ENCODE measurements at regions of chr1 and their contacts with region 1.

Region 1: DNA sequence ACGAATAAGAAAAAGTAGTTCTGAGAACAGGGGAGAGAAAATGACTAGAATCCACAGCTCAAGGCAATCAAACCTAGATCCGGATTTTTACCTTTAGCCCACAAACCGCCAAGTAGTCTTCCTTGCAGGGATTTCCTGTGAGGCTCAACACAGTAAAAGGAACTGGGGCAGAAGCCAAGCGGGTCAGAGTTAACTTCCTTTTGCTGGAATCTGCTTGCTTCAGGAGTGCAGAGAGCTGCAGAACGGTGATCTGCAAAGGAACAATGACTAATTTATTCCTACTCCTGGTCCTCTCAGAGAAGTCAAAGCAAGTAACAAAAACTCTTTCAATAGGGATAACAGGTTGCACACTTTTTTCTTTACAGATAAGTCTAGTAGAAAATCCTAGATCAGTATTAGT is 53.4 kb downstream of the UBR4 start:
- DNase-seq: no peak
- ATAC-seq: no peak
- H3K4me3 ChIP-seq: no peak overlapping the region
- H3K4me3 Mint-ChIP-seq: no peak overlapping the region
- H3K27ac ChIP-seq: no peak overlapping the region
- H3K27ac Mint-ChIP-seq: no peak overlapping the region
- H3K4me1 ChIP-seq: no peaks in the 10 kb centered on the region
- H3K4me1 Mint-ChIP-seq: no peaks in the 10 kb centered on the region
- H3K27me3 ChIP-seq: no peaks in the 10 kb centered on the region
- H3K27me3 Mint-ChIP-seq: no peaks in the 10 kb centered on the region
- CTCF ChIP-seq: no peak

Region 2: GRCh38 chr1:19203440-19203839 is 46.8 kb after region 1 on chr1:
- CTCF ChIA-PET with region 1: no interaction called
- POLR2A ChIA-PET with region 1: no interaction called
- intact Hi-C with region 1: loop called in 1 of 2 experiments (anchors 5 kb)
- DNase-seq: no peak
- ATAC-seq: no peak
- H3K4me3 ChIP-seq: no peak overlapping the region
- H3K4me3 Mint-ChIP-seq: no peak overlapping the region
- H3K27ac ChIP-seq: no peak overlapping the region
- H3K27ac Mint-ChIP-seq: no peak overlapping the region
- H3K4me1 ChIP-seq: peaks cover 29% of the 10 kb centered on the region
- H3K4me1 Mint-ChIP-seq: peaks cover 59% of the 10 kb centered on the region
- H3K27me3 ChIP-seq: no peaks in the 10 kb centered on the region
- H3K27me3 Mint-ChIP-seq: no peaks in the 10 kb centered on the region
- CTCF ChIP-seq: no peak

Region 3: DNA sequence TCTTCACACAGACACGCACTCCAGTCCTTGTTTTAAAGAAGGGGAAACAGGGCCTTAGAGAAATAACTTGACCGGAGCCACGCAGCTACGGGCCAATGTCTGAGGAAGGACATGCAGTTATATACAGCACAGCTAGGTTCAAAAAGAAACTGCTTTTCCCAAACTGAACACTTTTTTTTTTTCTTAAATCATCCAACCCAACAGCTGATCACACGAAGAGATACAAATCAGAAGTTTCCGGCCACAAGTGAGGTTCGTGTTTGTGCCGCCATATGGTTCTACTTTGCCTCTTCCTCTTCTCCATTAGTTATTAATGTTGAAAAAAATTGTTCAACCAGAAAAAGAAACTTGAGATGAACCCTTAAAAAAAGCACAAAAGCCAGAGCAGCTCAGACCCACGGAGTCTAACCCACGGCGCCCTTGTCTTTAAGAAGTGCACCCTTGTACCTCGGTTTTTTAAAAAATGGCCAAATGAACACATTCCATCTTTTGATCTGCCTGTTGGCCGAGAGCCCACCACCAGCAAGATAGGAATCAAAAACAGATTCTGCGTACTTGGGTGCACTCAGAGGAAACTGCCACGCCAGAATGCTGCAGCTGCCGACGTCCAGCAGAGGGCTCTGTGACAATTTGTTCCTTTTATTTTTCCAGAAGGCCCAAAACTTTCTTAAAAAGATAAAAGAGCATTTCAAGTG is 234.4 kb after region 1 on chr1:
- CTCF ChIA-PET with region 1: no interaction called
- POLR2A ChIA-PET with region 1: no interaction called
- intact Hi-C with region 1: no loop called
- DNase-seq: peak; percentile 46 to 87 (median 68)
- ATAC-seq: peak; percentile 70
- H3K4me3 ChIP-seq: peak overlapping the region; percentile 34 to 38
- H3K4me3 Mint-ChIP-seq: peak overlapping the region; percentile 85
- H3K27ac ChIP-seq: peak overlapping the region; percentile 50 to 66
- H3K27ac Mint-ChIP-seq: peak overlapping the region; percentile 90
- H3K4me1 ChIP-seq: peaks cover 54% of the 10 kb centered on the region
- H3K4me1 Mint-ChIP-seq: peaks cover 77% of the 10 kb centered on the region
- H3K27me3 ChIP-seq: no peaks in the 10 kb centered on the region
- H3K27me3 Mint-ChIP-seq: no peaks in the 10 kb centered on the region
- CTCF ChIP-seq: peak; percentile 88